Upper lobe of right lung (tissue), 1 donor: ENCODE measurements at regions of chr2 and their contacts with region 1.

Region 1: GRCh38 chr2:186629250-186629996 is 39.6 kb downstream of the ITGAV start:
- DNase-seq: no peak
- ATAC-seq: no peak
- H3K4me3 ChIP-seq: no peak overlapping the region
- H3K27ac ChIP-seq: no peak overlapping the region
- H3K4me1 ChIP-seq: no peaks in the 10 kb centered on the region
- H3K27me3 ChIP-seq: no peaks in the 10 kb centered on the region
- CTCF ChIP-seq: no peak

Region 2: DNA sequence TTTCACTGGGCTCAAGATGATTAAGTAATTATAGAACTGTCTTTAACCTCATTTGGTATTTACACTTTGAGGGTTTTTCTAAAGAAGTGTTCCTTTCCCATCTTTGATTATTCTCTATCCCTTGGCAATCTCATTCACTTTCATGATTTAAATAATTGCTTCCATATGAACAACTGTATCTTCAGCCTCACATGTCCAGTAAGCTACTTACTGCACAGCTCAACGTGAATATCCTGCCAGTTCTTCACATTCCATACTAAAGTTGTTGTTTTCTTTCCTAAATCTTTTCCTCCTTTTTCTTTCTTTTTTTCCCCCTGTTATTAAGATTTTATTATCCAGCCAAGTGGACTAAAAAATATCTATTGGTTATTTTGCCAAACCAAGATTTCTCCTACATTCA is 105.6 kb before region 1 on chr2:
- intact Hi-C with region 1: loop called (anchors 10 kb)
- DNase-seq: no peak
- ATAC-seq: no peak
- H3K4me3 ChIP-seq: no peak overlapping the region
- H3K27ac ChIP-seq: no peak overlapping the region
- H3K4me1 ChIP-seq: no peaks in the 10 kb centered on the region
- H3K27me3 ChIP-seq: no peaks in the 10 kb centered on the region
- CTCF ChIP-seq: no peak